B cell (primary cell): ENCODE measurements at regions of chr1 and their contacts with region 1.

Region 1: DNA sequence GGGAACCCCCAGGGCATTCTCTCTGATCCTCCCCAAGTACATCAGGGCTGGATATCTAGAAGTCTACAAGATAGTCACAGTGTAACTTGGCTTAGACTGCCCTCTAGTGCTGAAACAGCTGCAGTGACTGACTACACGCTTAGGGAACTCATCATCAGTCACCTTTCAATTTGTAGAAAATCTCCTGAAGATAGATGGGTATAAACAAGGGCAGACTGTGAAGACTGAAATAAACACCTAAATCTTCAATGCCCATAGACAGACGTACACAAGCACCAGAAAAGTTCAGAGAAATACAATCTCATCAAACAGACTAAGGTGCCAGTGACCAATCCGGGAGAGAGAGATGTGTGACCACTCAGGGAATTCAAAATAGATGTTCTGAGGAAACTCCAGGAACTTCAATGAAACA is 46.6 kb downstream of the PACC1 start:
- DNase-seq: peak; percentile 72
- ATAC-seq: peak; percentile 80
- H3K4me3 ChIP-seq: no peak overlapping the region
- H3K4me3 Mint-ChIP-seq: no peak overlapping the region
- H3K27ac ChIP-seq: no peak overlapping the region
- H3K27ac Mint-ChIP-seq: no peak overlapping the region
- H3K4me1 ChIP-seq: no peaks in the 10 kb centered on the region
- H3K4me1 Mint-ChIP-seq: peaks cover 2% of the 10 kb centered on the region
- H3K27me3 ChIP-seq: no peaks in the 10 kb centered on the region
- H3K27me3 Mint-ChIP-seq: no peaks in the 10 kb centered on the region
- CTCF ChIP-seq: peak; percentile 86

Region 2: DNA sequence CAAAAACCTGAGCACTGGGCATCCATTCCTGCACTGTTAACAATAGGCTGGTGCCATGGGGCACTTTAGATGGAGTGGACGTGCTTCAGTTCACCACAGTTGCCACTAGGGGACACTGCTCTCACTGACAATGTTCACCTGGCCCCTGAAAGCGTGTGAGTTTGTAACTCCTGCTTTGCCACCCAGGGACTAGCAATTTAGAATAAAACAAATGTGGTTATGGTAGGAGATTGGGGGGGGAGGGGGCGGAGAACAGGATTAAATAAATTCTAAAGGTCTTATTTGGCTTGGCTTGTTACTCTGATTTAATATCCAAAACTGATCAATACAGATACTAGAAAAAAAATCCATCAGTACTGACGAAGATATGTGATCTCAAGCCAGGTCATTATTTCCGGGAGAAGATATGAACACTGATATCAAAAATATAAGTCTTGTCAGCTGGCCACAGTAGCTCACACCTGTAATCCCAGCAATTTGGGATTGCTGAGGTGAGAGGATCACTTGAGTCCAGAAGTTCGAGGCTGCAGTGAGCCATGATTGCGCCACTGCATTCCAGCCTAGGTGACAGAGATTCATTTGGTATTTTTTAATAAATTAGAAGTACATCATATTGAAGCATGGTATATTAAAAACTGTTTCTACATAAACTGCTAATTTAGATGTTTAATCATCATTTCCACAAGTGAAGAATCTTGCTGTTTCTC is 355.9 kb before region 1 on chr1:
- CTCF ChIA-PET with region 1: interaction called, 9 read pairs
- POLR2A ChIA-PET with region 1: no interaction called
- intact Hi-C with region 1: loop called (anchors 1 kb)
- DNase-seq: peak; percentile 68
- ATAC-seq: peak; percentile 94
- H3K4me3 ChIP-seq: no peak overlapping the region
- H3K4me3 Mint-ChIP-seq: no peak overlapping the region
- H3K27ac ChIP-seq: no peak overlapping the region
- H3K27ac Mint-ChIP-seq: no peak overlapping the region
- H3K4me1 ChIP-seq: no peaks in the 10 kb centered on the region
- H3K4me1 Mint-ChIP-seq: no peaks in the 10 kb centered on the region
- H3K27me3 ChIP-seq: no peaks in the 10 kb centered on the region
- H3K27me3 Mint-ChIP-seq: no peaks in the 10 kb centered on the region
- CTCF ChIP-seq: peak; percentile 96

Region 3: DNA sequence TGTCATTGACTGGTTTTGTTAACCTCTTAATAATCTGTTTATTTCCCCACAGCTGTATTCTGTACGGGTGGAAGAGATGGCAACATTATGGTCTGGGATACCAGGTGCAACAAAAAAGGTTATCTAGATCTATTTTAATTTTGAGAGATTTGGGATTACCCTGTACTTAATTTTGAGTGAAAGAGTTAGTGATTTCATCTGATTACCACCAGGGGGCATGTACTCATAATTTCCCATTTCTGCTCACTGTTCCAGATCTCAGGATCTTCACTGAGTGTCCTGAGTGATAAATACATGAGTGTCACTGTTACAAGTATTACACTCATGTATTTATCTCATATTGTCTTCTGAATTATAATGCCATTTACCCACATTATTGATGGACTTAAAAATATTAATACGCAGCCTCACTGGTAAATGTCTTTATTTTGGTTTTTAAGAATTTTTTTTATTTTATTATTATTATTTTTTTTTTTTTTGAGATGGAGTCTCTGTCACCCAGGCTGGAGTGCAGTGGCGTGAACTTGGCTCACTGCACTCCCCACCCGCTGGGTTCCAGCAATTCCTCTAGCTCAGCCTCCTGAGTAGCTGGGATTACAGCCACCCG is 305.1 kb before region 1 on chr1:
- CTCF ChIA-PET with region 1: interaction called, 24 read pairs
- POLR2A ChIA-PET with region 1: no interaction called
- intact Hi-C with region 1: loop called (anchors 1 kb)
- DNase-seq: peak; percentile 56
- ATAC-seq: no peak
- H3K4me3 ChIP-seq: no peak overlapping the region
- H3K4me3 Mint-ChIP-seq: no peak overlapping the region
- H3K27ac ChIP-seq: no peak overlapping the region
- H3K27ac Mint-ChIP-seq: no peak overlapping the region
- H3K4me1 ChIP-seq: no peaks in the 10 kb centered on the region
- H3K4me1 Mint-ChIP-seq: no peaks in the 10 kb centered on the region
- H3K27me3 ChIP-seq: no peaks in the 10 kb centered on the region
- H3K27me3 Mint-ChIP-seq: no peaks in the 10 kb centered on the region
- CTCF ChIP-seq: peak; percentile 95

Region 4: DNA sequence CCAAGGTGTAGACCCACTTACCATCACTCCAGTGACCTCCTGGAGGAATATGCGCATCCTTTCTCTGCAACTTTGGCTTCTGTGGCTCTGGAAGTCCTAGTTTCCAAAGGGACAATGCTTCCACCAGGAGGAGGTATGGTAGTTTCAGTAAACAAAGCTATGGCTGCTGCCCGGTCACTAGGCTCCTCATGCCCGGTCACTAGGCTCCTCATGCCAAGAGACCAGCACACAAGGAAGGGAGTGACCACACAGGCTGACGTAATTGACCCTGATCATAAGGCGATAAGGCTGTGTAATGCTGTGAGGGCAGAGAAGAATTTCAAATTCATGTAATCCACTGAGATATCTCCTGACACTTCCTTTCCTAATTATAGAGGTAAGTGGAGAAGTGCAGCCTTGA is 229.6 kb before region 1 on chr1:
- CTCF ChIA-PET with region 1: no interaction called
- POLR2A ChIA-PET with region 1: no interaction called
- intact Hi-C with region 1: no loop called
- DNase-seq: no peak
- ATAC-seq: no peak
- H3K4me3 ChIP-seq: no peak overlapping the region
- H3K4me3 Mint-ChIP-seq: no peak overlapping the region
- H3K27ac ChIP-seq: no peak overlapping the region
- H3K27ac Mint-ChIP-seq: no peak overlapping the region
- H3K4me1 ChIP-seq: no peaks in the 10 kb centered on the region
- H3K4me1 Mint-ChIP-seq: no peaks in the 10 kb centered on the region
- H3K27me3 ChIP-seq: no peaks in the 10 kb centered on the region
- H3K27me3 Mint-ChIP-seq: no peaks in the 10 kb centered on the region
- CTCF ChIP-seq: no peak